ENCODE measurements at regions of chr9 and their contacts with region 1.

Region 1: GRCh38 chr9:131237931-131238401 is 38.3 kb downstream of the FAM78A start:
- DNase-seq: peak in 1 of 2 experiments; percentile 79
- H3K4me3 ChIP-seq: no peak overlapping the region
- H3K27ac ChIP-seq: no peak overlapping the region
- H3K4me1 ChIP-seq: peaks cover 0 to 20% (median 16%) of the 10 kb centered on the region in 4 experiments; a peak in 6 of 7 replicates
- H3K27me3 ChIP-seq: no peaks in the 10 kb centered on the region
- CTCF ChIP-seq: no peak
- EP300 ChIP-seq: no peak
- POLR2A ChIP-seq: no peak
- RAD21 ChIP-seq: no peak

Region 2: GRCh38 chr9:131227112-131227958 is 10.6 kb before region 1 on chr9:
- CTCF ChIA-PET with region 1: interaction called, 3 read pairs
- POLR2A ChIA-PET with region 1: interaction called, 18 read pairs
- DNase-seq: no peak
- H3K4me3 ChIP-seq: no peak overlapping the region
- H3K27ac ChIP-seq: no peak overlapping the region
- H3K4me1 ChIP-seq: peaks cover 8 to 16% (median 12%) of the 10 kb centered on the region in 4 experiments; a peak in 6 of 7 replicates
- H3K27me3 ChIP-seq: no peaks in the 10 kb centered on the region
- CTCF ChIP-seq: no peak
- EP300 ChIP-seq: no peak
- POLR2A ChIP-seq: no peak
- RAD21 ChIP-seq: no peak

Measured in H1 (cell line).